ENCODE measurements at regions of chr7 and their contacts with region 1.

Region 1: DNA sequence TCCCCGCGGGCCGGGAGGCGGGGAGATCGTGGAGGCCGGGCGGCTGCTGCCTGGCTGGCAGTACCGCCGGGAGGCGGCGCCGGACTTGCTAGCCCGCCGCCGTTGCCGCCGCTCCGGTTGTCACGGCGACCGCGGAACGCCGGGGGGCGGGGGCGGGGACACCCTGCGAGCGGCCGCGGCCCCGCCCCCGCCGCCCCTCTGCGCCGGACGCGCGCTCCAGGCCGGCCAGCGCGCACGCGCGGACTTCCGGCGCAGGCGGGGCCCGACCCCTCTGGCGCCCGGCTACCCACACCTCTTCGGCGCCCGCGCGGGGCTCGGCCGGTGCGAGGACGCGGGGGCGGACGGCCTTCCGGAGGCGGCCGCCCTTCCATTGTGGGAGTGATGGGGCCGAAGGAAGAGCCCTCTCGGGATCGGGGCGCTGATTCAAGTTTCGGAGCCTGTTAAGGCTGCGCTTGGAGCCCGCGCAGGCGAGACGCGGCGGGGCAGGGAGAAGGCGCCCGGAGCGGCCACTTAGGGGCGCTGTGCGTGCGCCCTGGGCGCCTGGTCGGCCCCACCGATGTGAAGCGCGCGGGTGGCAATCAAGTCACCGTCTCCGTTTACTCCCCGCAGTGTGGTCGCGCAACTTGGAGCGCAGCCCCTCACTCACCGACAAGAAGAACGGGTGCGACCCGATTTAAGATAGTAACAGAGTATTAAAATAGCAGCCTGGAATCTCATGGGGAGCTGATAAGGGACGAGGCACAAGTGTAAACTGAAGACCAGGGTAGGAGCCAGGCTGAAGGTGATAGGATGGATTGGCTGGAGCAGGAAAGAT is 448 bp upstream of the DPY19L1 start:
- DNase-seq: no peak
- ATAC-seq: peak; percentile 94
- H3K4me3 ChIP-seq: peak overlapping the region; percentile 71 to 90
- H3K27ac ChIP-seq: peak overlapping the region; percentile 89
- H3K4me1 ChIP-seq: peaks cover 23% of the 10 kb centered on the region
- H3K27me3 ChIP-seq: no peaks in the 10 kb centered on the region
- CTCF ChIP-seq: peak; percentile 99

Region 2: GRCh38 chr7:34321000-34321581 is 716.6 kb before region 1 on chr7:
- CTCF ChIA-PET with region 1: interaction called, 8 read pairs
- POLR2A ChIA-PET with region 1: no interaction called
- in situ Hi-C with region 1: no loop called
- intact Hi-C with region 1: loop called (anchors 10 kb)
- DNase-seq: peak; percentile 58
- ATAC-seq: peak; percentile 96
- H3K4me3 ChIP-seq: peak overlapping the region; percentile 17 to 46
- H3K27ac ChIP-seq: no peak overlapping the region
- H3K4me1 ChIP-seq: peaks cover 6% of the 10 kb centered on the region; the same call in 1 of the 2 replicates
- H3K27me3 ChIP-seq: no peaks in the 10 kb centered on the region
- CTCF ChIP-seq: peak; percentile 96

Region 3: GRCh38 chr7:34747867-34748727 is 289.6 kb before region 1 on chr7:
- CTCF ChIA-PET with region 1: no interaction called
- POLR2A ChIA-PET with region 1: no interaction called
- in situ Hi-C with region 1: no loop called
- intact Hi-C with region 1: loop called (anchors 10 kb)
- DNase-seq: peak; percentile 93
- ATAC-seq: peak; percentile 97
- H3K4me3 ChIP-seq: peak overlapping the region in 1 of 2 experiments; percentile 15; a peak in 2 of 4 replicates
- H3K27ac ChIP-seq: peak overlapping the region; percentile 88
- H3K4me1 ChIP-seq: peaks cover 27% of the 10 kb centered on the region
- H3K27me3 ChIP-seq: no peaks in the 10 kb centered on the region
- CTCF ChIP-seq: peak; percentile 27; the same call in 1 of the 2 replicates

Region 4: DNA sequence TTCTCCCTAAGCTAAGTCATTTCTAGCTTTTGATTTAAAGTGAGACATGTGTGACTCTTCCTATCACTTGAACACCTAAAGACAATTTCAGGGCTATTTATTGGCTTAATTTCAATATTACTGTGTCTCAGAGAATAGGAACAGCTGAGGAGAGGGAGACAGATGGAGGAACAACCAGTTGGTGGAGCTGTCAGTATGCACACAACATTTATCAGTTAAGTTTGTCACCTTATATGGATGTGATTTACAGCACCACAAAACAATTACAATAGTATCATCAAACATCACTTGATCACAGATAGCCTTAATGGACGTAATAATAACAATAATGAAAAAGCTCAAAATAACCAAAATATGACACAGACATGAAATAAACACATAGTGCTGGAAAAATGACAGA is 250.2 kb before region 1 on chr7:
- CTCF ChIA-PET with region 1: no interaction called
- POLR2A ChIA-PET with region 1: no interaction called
- in situ Hi-C with region 1: no loop called
- intact Hi-C with region 1: no loop called
- DNase-seq: no peak
- ATAC-seq: no peak
- H3K4me3 ChIP-seq: no peak overlapping the region
- H3K27ac ChIP-seq: no peak overlapping the region
- H3K4me1 ChIP-seq: no peaks in the 10 kb centered on the region
- H3K27me3 ChIP-seq: no peaks in the 10 kb centered on the region
- CTCF ChIP-seq: no peak; the same call in 1 of the 2 replicates

Region 5: GRCh38 chr7:34991938-34992840 is 45.5 kb before region 1 on chr7:
- CTCF ChIA-PET with region 1: interaction called, 12 read pairs
- POLR2A ChIA-PET with region 1: no interaction called
- in situ Hi-C with region 1: no loop called
- intact Hi-C with region 1: no loop called
- DNase-seq: no peak
- ATAC-seq: peak; percentile 75; the same call in 1 of the 2 replicates
- H3K4me3 ChIP-seq: no peak overlapping the region
- H3K27ac ChIP-seq: no peak overlapping the region
- H3K4me1 ChIP-seq: no peaks in the 10 kb centered on the region
- H3K27me3 ChIP-seq: no peaks in the 10 kb centered on the region
- CTCF ChIP-seq: no peak

Region 6: GRCh38 chr7:35012160-35012559 is 25.6 kb before region 1 on chr7:
- CTCF ChIA-PET with region 1: no interaction called
- POLR2A ChIA-PET with region 1: no interaction called
- in situ Hi-C with region 1: no loop called
- intact Hi-C with region 1: no loop called
- DNase-seq: no peak
- ATAC-seq: no peak
- H3K4me3 ChIP-seq: no peak overlapping the region
- H3K27ac ChIP-seq: no peak overlapping the region
- H3K4me1 ChIP-seq: peaks cover 9% of the 10 kb centered on the region; the same call in 1 of the 2 replicates
- H3K27me3 ChIP-seq: no peaks in the 10 kb centered on the region
- CTCF ChIP-seq: no peak

Region 7: DNA sequence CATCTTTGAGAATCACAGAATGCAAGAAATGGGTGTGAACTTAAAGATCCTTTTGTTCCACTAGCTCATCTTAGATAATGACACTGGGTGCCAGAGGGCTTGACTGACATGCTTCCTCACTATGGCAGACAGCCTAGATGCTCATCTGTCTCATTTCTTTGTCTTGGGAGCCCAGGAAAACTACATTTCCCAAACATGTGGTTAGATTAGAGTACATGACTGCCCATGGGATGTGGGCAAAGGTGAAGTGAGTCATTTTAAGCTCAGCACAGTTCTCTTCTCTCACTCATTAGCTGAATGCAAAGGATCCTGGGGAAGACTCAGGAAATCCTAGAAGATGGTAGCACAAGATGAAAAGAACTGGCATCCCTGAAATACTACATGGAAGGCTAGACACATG is 248.7 kb after region 1 on chr7:
- CTCF ChIA-PET with region 1: no interaction called
- POLR2A ChIA-PET with region 1: no interaction called
- in situ Hi-C with region 1: no loop called
- intact Hi-C with region 1: no loop called
- DNase-seq: no peak
- ATAC-seq: no peak
- H3K4me3 ChIP-seq: no peak overlapping the region
- H3K27ac ChIP-seq: no peak overlapping the region
- H3K4me1 ChIP-seq: no peaks in the 10 kb centered on the region
- H3K27me3 ChIP-seq: peaks cover 25% of the 10 kb centered on the region
- CTCF ChIP-seq: no peak

Region 8: DNA sequence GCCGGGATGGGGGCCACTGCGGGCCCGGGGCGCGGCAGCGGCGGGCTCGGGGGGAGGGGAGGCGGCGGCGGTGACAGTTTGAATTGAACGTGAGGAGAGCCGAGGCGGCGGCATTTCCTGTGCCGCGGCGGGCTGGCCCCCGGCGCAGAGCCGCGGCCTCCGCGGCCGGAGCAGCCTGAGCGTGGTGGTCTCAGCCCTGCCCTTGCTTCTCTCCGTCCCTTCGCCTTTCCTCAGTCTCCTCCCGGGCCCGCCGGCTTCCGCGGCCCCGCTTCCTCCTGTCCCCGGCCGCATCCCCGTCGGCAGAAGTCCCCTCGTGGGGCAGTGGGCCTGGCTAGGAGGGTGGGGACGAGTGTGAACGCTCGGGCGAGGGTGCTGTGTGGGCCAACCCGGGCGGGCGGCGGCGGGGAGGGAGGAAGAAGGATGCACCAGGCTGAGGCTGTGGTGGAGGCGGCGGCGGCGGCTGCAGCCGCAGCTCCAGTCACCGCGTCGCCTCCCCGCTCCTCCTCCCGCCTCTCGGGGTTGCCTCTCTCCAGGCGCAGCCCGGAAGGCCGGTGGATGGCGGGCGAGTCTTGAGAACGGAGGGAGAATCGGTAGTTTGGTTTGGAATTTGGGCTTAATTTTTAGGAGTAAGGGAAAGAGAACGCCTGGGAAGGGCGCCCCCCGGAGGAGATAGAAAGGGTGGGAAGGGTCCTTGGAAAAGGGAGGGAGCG is 763.8 kb after region 1 on chr7:
- CTCF ChIA-PET with region 1: no interaction called
- POLR2A ChIA-PET with region 1: interaction called, 16 read pairs
- in situ Hi-C with region 1: no loop called
- intact Hi-C with region 1: no loop called
- DNase-seq: peak; percentile 17
- ATAC-seq: peak; percentile 65
- H3K4me3 ChIP-seq: peak overlapping the region; percentile 79 to 94
- H3K27ac ChIP-seq: peak overlapping the region; percentile 99
- H3K4me1 ChIP-seq: peaks cover 44% of the 10 kb centered on the region
- H3K27me3 ChIP-seq: no peaks in the 10 kb centered on the region
- CTCF ChIP-seq: peak; percentile 95

Measured in Panc1 (cell line).